Dorsolateral prefrontal cortex (tissue), 120 donors: ENCODE measurements at regions of chr2 and their contacts with region 1.

Region 1: GRCh38 chr2:184598316-184599053 is at the start of gene ZNF804A:
- DNase-seq: peak; percentile 59 to 91 (median 78)
- H3K4me3 ChIP-seq: peak within 1 kb of the TSS; percentile 56 to 87 (median 71)
- H3K27ac ChIP-seq: peak within 1 kb of the TSS in 58 of 59 donors; percentile 40 to 91 (median 78)
- H3K27me3 ChIP-seq: peaks cover 0 to 5% (median 0%) of the 10 kb centered on the region in 45 donors
- CTCF ChIP-seq: peak in 2 of 56 donors; percentile 9 to 12
- total RNA-seq, gene ZNF804A: 1.5 to 12.4 (median 7.3) TPM

Region 2: DNA sequence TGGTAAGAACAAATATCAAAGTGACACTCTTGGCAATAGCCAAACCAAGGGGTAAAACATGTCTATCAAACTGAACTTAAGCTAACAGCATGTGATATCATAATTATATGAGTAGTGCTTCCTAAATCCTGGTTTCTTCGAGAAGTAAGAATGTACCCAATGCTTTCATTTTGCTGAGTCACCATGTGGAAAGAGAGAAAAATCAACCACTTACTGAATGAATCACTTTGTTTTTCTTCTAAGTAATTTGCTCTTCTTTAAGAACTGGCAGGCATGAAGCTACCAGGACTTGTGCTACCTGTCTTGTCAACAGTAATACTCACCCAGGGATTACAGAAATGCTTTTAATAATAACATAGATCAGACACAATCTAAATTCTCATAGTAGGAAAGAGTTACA is 1538.9 kb before region 1 on chr2:
- intact Hi-C with region 1: loop called in 1 of 2 experiments (anchors 10 kb)
- DNase-seq: no peak
- H3K4me3 ChIP-seq: no peak overlapping the region
- H3K27ac ChIP-seq: peak overlapping the region in 30 of 59 donors; percentile 2 to 82 (median 44)
- H3K27me3 ChIP-seq: no peaks in the 10 kb centered on the region
- CTCF ChIP-seq: no peak

Region 3: DNA sequence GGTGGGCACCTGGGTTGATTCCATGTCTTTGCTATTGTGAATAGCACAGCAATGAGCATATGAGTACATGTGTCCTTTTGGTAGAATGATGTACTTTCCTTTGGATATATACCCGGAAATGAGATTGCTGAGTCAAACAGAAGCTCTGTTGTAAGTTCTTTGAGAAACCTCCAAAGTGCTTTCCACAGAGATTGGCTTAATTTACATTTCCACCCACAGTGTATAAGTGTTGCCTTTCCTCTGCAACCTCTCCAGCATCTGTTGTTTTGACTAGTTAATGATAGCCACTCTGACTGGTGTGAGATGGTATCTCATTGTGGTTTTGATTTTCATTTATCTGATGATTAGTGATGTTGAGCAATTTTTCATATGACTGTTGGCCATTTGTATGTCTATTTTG is 194.7 kb after region 1 on chr2:
- intact Hi-C with region 1: no loop called
- DNase-seq: no peak
- H3K4me3 ChIP-seq: no peak overlapping the region
- H3K27ac ChIP-seq: no peak overlapping the region
- H3K27me3 ChIP-seq: no peaks in the 10 kb centered on the region
- CTCF ChIP-seq: no peak